ENCODE measurements at regions of chr2 and their contacts with region 1.

Region 1: GRCh38 chr2:151905963-151906632 is 77.9 kb upstream of the ARL5A start:
- DNase-seq: no peak
- ATAC-seq: no peak
- H3K4me3 ChIP-seq: no peak overlapping the region
- H3K27ac ChIP-seq: no peak overlapping the region
- H3K4me1 ChIP-seq: peaks cover 0 to 3% of the 10 kb centered on the region in 2 donors
- H3K27me3 ChIP-seq: no peaks in the 10 kb centered on the region

Region 2: DNA sequence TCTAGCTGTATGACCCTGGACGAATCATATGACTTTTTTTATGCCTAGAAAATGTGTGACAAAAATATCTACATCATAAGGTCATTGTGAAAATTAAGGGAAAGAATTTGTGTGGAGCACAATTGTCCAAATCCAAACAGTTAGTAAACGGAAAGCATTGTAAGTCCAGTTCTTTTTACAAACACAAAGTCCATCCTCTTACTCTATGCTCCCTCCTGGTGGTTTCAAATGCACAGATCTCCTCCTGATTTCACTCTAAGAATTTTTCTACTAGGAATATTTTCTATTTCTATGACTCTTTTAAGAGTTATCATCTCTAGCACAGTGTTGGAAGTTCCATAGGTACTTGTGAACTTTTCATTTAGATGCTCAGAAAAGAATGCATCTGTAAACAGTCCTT is 47.4 kb after region 1 on chr2:
- intact Hi-C with region 1: loop called in 1 of 2 experiments (anchors 10 kb)
- DNase-seq: no peak
- ATAC-seq: no peak
- H3K4me3 ChIP-seq: no peak overlapping the region
- H3K27ac ChIP-seq: no peak overlapping the region
- H3K4me1 ChIP-seq: peaks cover 2 to 3% of the 10 kb centered on the region in 2 donors
- H3K27me3 ChIP-seq: no peaks in the 10 kb centered on the region

Measured in aorta (tissue), 5 donors.